AG04449 (cell line): ENCODE measurements at regions of chr22 and their contacts with region 1.

Region 1: GRCh38 chr22:31148953-31149627 is 8.8 kb upstream of the PLA2G3 start:
- DNase-seq: no peak
- H3K4me3 ChIP-seq: no peak overlapping the region
- CTCF ChIP-seq: peak; percentile 97

Region 2: GRCh38 chr22:30763815-30764686 is 385.0 kb before region 1 on chr22:
- CTCF ChIA-PET with region 1: interaction called, 17 read pairs
- POLR2A ChIA-PET with region 1: no interaction called
- DNase-seq: peak; percentile 45
- H3K4me3 ChIP-seq: no peak overlapping the region
- CTCF ChIP-seq: peak; percentile 71

Region 3: DNA sequence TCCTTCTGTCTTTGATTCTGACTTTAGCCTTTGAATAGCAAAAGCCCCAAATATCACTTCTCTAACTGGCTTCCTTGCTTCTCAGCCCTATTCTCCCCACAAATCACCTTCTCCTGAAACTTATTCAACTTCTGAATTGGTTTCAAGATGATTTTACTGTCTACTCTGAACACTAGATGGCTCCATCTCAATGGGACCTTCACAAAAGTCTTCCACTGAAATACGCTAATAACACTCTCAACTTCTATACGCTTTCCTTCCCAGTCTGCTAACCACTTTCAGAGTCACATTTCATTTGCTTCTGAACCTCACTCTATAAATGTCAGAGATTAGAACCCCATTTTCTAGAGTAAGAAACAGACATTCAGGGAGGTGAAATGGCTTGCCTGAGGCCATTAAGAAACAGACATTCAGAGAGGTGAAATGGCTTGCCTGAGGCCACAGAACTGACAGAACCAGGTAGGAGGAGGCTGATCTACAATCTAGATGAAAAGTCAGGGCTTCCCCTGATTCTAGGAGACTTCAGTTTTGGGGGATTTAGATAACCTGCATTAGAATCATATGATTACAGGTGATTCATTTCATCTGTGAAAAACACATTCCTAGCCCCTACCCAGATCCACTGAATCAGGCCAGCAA is 201.2 kb before region 1 on chr22:
- CTCF ChIA-PET with region 1: interaction called, 42 read pairs
- POLR2A ChIA-PET with region 1: no interaction called
- DNase-seq: peak; percentile 16
- H3K4me3 ChIP-seq: no peak overlapping the region
- CTCF ChIP-seq: peak; percentile 40

Region 4: GRCh38 chr22:31080848-31081649 is 68.0 kb before region 1 on chr22 and contains the start of gene SMTN:
- CTCF ChIA-PET with region 1: interaction called, 22 read pairs
- POLR2A ChIA-PET with region 1: no interaction called
- DNase-seq: no peak
- H3K4me3 ChIP-seq: peak within 1 kb of the TSS; percentile 88
- CTCF ChIP-seq: no peak

Region 5: GRCh38 chr22:31089160-31090100 is 59.7 kb before region 1 on chr22:
- CTCF ChIA-PET with region 1: interaction called, 22 read pairs
- POLR2A ChIA-PET with region 1: no interaction called
- DNase-seq: no peak
- H3K4me3 ChIP-seq: no peak overlapping the region
- CTCF ChIP-seq: peak; percentile 88

Region 6: GRCh38 chr22:31098632-31099110 is 50.4 kb before region 1 on chr22:
- CTCF ChIA-PET with region 1: interaction called, 12 read pairs
- POLR2A ChIA-PET with region 1: no interaction called
- DNase-seq: no peak
- H3K4me3 ChIP-seq: no peak overlapping the region
- CTCF ChIP-seq: no peak

Region 7: GRCh38 chr22:31160328-31160978 is 11.4 kb after region 1 on chr22:
- CTCF ChIA-PET with region 1: interaction called, 24 read pairs
- POLR2A ChIA-PET with region 1: no interaction called
- DNase-seq: no peak
- H3K4me3 ChIP-seq: peak overlapping the region; percentile 93
- CTCF ChIP-seq: no peak

Region 8: DNA sequence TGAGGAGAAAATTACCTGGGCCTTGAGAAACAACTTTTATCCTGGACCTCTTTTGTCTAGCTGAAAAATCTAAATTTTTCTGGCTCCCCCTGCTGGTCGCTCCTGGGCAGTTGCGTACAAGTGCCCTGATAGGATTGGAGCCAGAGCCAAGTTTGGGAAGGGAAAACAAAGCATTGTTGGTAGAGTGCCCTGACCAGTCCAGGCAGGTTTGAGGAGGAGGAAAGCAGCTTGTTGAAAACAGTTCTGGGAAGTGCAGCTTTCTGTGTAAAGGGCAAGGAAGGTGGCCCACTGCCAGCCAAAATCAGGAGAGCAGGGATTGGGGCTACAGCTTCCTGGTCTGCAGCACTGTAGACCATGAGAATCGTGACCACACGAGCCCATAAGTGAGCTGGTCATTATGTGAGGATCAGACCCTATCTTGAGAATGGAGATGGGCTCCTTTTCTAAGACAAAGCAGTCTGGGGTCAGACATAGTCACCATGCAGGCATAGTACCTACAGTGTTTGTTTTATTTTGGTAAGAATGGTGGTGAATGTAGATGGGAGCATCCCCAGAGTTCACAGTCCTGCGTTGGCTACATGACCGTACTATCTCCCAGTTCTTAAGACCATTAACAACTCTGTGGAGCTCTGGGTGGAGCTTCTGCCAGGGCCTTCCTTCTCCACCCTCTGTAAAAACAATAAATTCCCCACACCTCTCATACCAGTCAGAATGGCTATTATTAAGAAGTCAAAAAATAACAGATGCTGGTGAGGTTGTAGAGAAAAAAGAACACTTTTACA is 164.5 kb after region 1 on chr22:
- CTCF ChIA-PET with region 1: no interaction called
- POLR2A ChIA-PET with region 1: no interaction called
- DNase-seq: no peak
- H3K4me3 ChIP-seq: no peak overlapping the region
- CTCF ChIP-seq: peak; percentile 73

Region 9: GRCh38 chr22:31734512-31734911 is 585.4 kb after region 1 on chr22:
- CTCF ChIA-PET with region 1: no interaction called
- POLR2A ChIA-PET with region 1: no interaction called
- DNase-seq: peak; percentile 38
- H3K4me3 ChIP-seq: no peak overlapping the region
- CTCF ChIP-seq: no peak